Left lung (tissue), 14 donors: ENCODE measurements at regions of chr10 and their contacts with region 1.

Region 1: GRCh38 chr10:43689955-43690771 is 41.5 kb upstream of the ZNF32 start:
- DNase-seq: peak; percentile 84 to 96 (median 91)
- ATAC-seq: peak; percentile 100
- H3K4me3 ChIP-seq: peak overlapping the region; percentile 45 to 48
- H3K27ac ChIP-seq: peak overlapping the region; percentile 74 to 84
- H3K4me1 ChIP-seq: peaks cover 0 to 21% of the 10 kb centered on the region in 2 donors
- H3K27me3 ChIP-seq: peaks cover 0 to 16% of the 10 kb centered on the region in 2 donors
- CTCF ChIP-seq: peak; percentile 93

Region 2: DNA sequence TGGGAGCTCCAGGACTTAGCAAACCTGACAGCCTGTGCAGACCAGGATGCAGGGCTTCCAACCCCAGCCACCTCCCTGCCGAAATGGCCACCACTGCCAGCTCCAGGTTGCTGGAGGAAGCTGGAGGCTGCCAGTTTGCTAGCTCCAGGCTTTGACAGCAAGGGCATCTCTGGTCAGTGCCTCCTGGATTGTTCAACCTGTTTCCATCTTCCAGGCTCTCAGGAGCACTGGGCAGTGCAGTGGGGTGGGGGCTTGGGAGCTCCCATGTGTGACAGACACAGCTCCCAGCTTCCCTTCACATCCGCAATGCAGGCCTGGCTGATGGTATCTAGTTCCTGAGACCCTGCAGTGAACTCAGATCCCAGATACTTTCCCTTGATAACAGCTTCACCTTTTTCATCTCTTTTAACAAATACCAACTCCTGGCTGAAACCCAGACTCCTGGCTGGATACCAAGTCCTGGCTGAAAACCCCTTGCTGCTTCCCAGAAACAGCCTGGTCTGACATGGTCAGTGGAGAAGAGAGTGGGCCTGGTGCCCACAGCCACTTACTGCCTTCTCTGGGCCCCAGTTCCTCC is 634.1 kb before region 1 on chr10:
- intact Hi-C with region 1: no loop called
- DNase-seq: peak in 2 of 4 donors; percentile 19 to 29
- ATAC-seq: no peak
- H3K4me3 ChIP-seq: no peak overlapping the region
- H3K27ac ChIP-seq: no peak overlapping the region
- H3K4me1 ChIP-seq: no peaks in the 10 kb centered on the region
- H3K27me3 ChIP-seq: peaks cover 0 to 25% of the 10 kb centered on the region in 2 donors
- CTCF ChIP-seq: no peak

Region 3: DNA sequence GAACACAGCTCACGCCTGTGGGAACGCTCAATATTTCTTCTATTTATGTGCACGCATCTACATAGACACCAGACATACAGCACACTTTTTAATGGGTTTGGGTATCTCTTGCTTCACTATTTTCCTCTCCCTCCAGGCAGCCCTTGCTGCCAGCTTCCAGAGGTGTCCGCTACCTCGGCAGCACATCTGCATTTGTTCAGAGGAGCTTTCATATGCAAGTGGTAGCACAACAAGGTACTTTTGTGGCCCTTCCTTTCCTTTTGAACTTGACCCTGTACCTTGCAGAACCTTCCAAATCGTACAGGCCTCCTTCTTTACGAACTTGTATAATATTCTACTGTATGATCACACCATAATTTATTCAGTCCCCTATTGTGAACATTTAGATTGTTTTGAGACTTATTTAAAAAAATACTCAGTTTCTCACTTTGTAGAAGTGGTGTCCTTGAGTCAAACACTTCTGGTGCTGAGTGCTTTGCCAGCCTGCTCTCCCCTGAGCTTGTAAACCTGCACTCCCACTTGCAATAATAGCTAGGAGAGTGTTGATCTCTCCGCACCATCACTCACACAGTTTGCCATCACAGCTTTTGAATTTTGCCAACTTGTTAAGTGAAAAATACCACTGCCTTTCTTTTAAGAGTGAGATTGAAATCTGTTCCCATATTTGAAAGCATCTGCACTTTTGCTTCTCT is 64.6 kb after region 1 on chr10:
- intact Hi-C with region 1: no loop called
- DNase-seq: no peak
- ATAC-seq: no peak
- H3K4me3 ChIP-seq: no peak overlapping the region
- H3K27ac ChIP-seq: no peak overlapping the region
- H3K4me1 ChIP-seq: no peaks in the 10 kb centered on the region
- H3K27me3 ChIP-seq: no peaks in the 10 kb centered on the region
- CTCF ChIP-seq: no peak

Region 4: GRCh38 chr10:43905512-43906236 is 215.5 kb after region 1 on chr10:
- intact Hi-C with region 1: loop called in 1 of 2 experiments (anchors 10 kb)
- DNase-seq: peak in 2 of 4 donors; percentile 75 to 84
- ATAC-seq: peak; percentile 53
- H3K4me3 ChIP-seq: no peak overlapping the region
- H3K27ac ChIP-seq: no peak overlapping the region
- H3K4me1 ChIP-seq: peaks cover 0 to 6% of the 10 kb centered on the region in 2 donors
- H3K27me3 ChIP-seq: no peaks in the 10 kb centered on the region
- CTCF ChIP-seq: no peak

Region 5: GRCh38 chr10:44125879-44126278 is 435.7 kb after region 1 on chr10:
- intact Hi-C with region 1: no loop called
- DNase-seq: no peak
- ATAC-seq: no peak
- H3K4me3 ChIP-seq: no peak overlapping the region
- H3K27ac ChIP-seq: no peak overlapping the region
- H3K4me1 ChIP-seq: no peaks in the 10 kb centered on the region
- H3K27me3 ChIP-seq: no peaks in the 10 kb centered on the region
- CTCF ChIP-seq: no peak

Region 6: GRCh38 chr10:44386546-44387052 is 696.4 kb after region 1 on chr10:
- intact Hi-C with region 1: loop called in 1 of 2 experiments (anchors 5 kb)
- DNase-seq: peak; percentile 54 to 89 (median 78)
- ATAC-seq: peak; percentile 94
- H3K4me3 ChIP-seq: no peak overlapping the region
- H3K27ac ChIP-seq: no peak overlapping the region
- H3K4me1 ChIP-seq: peaks cover 6 to 22% of the 10 kb centered on the region in 2 donors
- H3K27me3 ChIP-seq: peaks cover 14 to 72% of the 10 kb centered on the region in 2 donors
- CTCF ChIP-seq: peak; percentile 83 to 86